B cell (primary cell): ENCODE measurements at regions of chr16 and their contacts with region 1.

Region 1: DNA sequence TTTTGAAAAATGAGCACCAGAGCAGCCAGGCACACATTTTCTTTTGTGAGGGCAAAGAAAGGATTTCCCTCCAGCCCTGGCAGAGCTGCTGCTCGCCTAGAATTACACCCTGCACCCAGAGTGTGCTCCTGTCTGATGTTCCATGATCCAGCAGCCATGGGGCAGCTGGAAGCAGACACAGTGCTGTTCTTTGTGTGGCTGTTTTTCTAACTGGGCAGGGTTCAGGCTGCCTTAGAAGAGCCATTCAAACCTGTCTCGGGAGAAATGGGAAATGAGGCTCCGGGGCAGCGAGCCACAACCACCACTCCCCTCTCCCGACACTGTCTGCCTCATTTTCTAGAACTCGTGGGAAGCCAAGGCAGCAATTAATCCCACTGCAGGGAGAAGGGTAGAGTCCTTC is 28.9 kb downstream of the LITAF start:
- DNase-seq: no peak
- ATAC-seq: no peak
- H3K4me3 ChIP-seq: no peak overlapping the region
- H3K4me3 Mint-ChIP-seq: no peak overlapping the region
- H3K27ac ChIP-seq: peak overlapping the region in 1 of 2 donors; percentile 39
- H3K27ac Mint-ChIP-seq: no peak overlapping the region
- H3K4me1 ChIP-seq: peaks cover 3 to 28% of the 10 kb centered on the region in 2 donors
- H3K4me1 Mint-ChIP-seq: peaks cover 25% of the 10 kb centered on the region
- H3K27me3 ChIP-seq: no peaks in the 10 kb centered on the region
- H3K27me3 Mint-ChIP-seq: no peaks in the 10 kb centered on the region
- CTCF ChIP-seq: no peak

Region 2: DNA sequence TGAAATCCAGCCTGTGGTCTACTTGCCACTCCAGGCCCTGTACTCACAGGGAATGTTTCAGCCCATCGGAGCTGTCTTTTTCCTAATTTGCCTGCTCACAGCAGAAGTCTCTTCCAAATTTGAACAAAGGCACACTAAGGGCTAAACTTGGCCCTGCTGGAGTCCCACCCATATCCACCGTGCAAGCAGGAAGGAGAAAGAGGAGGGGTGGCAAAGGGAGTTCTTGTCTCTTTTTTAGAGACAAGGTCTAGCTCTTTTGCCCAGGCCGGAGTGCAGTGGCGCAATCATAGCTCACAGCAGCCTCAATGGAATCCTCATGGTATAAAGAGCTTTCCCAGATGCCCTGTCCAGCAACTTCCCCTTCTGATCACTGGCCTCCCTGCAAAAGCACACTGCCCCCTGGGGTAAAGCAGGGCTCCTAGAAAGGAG is 274.0 kb before region 1 on chr16:
- CTCF ChIA-PET with region 1: no interaction called
- POLR2A ChIA-PET with region 1: no interaction called
- intact Hi-C with region 1: no loop called
- DNase-seq: no peak
- ATAC-seq: no peak
- H3K4me3 ChIP-seq: no peak overlapping the region
- H3K4me3 Mint-ChIP-seq: no peak overlapping the region
- H3K27ac ChIP-seq: no peak overlapping the region
- H3K27ac Mint-ChIP-seq: peak overlapping the region; percentile 6
- H3K4me1 ChIP-seq: peaks cover 15% of the 10 kb centered on the region in 2 donors
- H3K4me1 Mint-ChIP-seq: peaks cover 31% of the 10 kb centered on the region
- H3K27me3 ChIP-seq: no peaks in the 10 kb centered on the region
- H3K27me3 Mint-ChIP-seq: no peaks in the 10 kb centered on the region
- CTCF ChIP-seq: no peak

Region 3: DNA sequence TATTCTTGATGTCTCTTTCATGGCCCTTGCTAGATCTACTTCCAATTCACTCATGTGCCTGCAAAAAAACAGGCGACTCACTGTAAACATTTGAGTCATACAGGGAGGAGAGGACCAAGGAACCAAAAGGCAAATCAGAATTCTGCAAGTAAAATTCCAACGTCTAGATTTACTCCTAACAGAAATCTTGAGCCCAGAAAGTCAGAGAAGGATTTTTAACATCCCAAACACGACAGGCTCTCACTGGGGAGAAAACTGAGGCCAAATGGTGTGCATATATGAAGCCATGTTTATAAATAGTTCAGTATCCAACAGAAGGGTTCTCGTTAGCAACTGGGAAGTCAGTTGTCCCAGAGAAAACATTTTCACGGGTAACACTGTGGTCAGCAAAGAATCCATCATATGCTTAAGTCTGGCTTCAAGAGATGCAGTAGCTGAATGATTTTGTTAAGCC is 11.2 kb before region 1 on chr16:
- CTCF ChIA-PET with region 1: interaction called, 3 read pairs
- POLR2A ChIA-PET with region 1: interaction called, 12 read pairs
- intact Hi-C with region 1: no loop called
- DNase-seq: no peak
- ATAC-seq: no peak
- H3K4me3 ChIP-seq: no peak overlapping the region
- H3K4me3 Mint-ChIP-seq: no peak overlapping the region
- H3K27ac ChIP-seq: no peak overlapping the region
- H3K27ac Mint-ChIP-seq: no peak overlapping the region
- H3K4me1 ChIP-seq: no peaks in the 10 kb centered on the region
- H3K4me1 Mint-ChIP-seq: peaks cover 6% of the 10 kb centered on the region
- H3K27me3 ChIP-seq: no peaks in the 10 kb centered on the region
- H3K27me3 Mint-ChIP-seq: no peaks in the 10 kb centered on the region
- CTCF ChIP-seq: no peak